Activated CD8-positive, alpha-beta T cell treated with anti-CD3 and anti-CD28 coated beads for 36 hours (primary cell): ENCODE measurements at regions of chr5 and their contacts with region 1.

Region 1: GRCh38 chr5:176415952-176416924 is at the start of gene CLTB:
- DNase-seq: peak; percentile 89
- ATAC-seq: peak; percentile 96
- H3K4me3 Mint-ChIP-seq: peak within 1 kb of the TSS; percentile 77
- H3K27ac Mint-ChIP-seq: peak within 1 kb of the TSS; percentile 72
- H3K4me1 Mint-ChIP-seq: peaks cover 40% of the 10 kb centered on the region
- H3K27me3 Mint-ChIP-seq: no peaks in the 10 kb centered on the region
- CTCF ChIP-seq: peak; percentile 71
- total RNA-seq, gene CLTB: 48.2 to 48.6 TPM

Region 2: DNA sequence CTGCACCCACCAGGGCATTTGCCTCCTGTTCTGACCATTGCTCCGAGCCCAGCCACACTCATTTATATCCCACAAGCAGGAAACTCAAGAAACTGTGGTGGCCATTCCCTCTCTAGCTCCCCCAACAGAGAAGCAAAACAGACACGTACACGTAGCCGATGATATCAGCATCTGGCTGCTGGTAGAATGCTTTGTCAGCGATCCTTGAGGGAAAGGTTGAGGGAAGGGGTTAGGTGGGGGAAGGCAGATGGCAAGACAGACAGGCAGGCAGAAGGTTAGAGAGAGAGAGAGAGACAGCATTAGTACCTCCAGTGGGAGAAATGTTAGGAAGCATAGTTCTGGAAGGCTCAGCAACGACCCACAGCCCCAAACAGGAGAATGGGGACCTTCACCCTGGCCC is 19.9 kb before region 1 on chr5:
- CTCF ChIA-PET with region 1: no interaction called
- POLR2A ChIA-PET with region 1: no interaction called
- intact Hi-C with region 1: no loop called
- DNase-seq: no peak
- ATAC-seq: no peak
- H3K4me3 Mint-ChIP-seq: no peak overlapping the region
- H3K27ac Mint-ChIP-seq: peak overlapping the region; percentile 14
- H3K4me1 Mint-ChIP-seq: no peaks in the 10 kb centered on the region
- H3K27me3 Mint-ChIP-seq: no peaks in the 10 kb centered on the region
- CTCF ChIP-seq: no peak

Region 3: GRCh38 chr5:176429972-176430371 is 13.7 kb after region 1 on chr5:
- CTCF ChIA-PET with region 1: interaction called, 14 read pairs
- POLR2A ChIA-PET with region 1: interaction called, 3 read pairs
- intact Hi-C with region 1: no loop called
- DNase-seq: no peak
- ATAC-seq: peak; percentile 75
- H3K4me3 Mint-ChIP-seq: no peak overlapping the region
- H3K27ac Mint-ChIP-seq: no peak overlapping the region
- H3K4me1 Mint-ChIP-seq: peaks cover 9% of the 10 kb centered on the region
- H3K27me3 Mint-ChIP-seq: no peaks in the 10 kb centered on the region
- CTCF ChIP-seq: no peak